Motor neuron (in vitro differentiated cells): ENCODE measurements at regions of chr6 and their contacts with region 1.

Region 1: GRCh38 chr6:125099211-125100073 is 54.1 kb upstream of the TPD52L1 start:
- ATAC-seq: peak; percentile 73 to 99 (median 96)
- H3K4me3 ChIP-seq: peak overlapping the region; percentile 35 to 54 (median 36)
- H3K27ac ChIP-seq: no peak overlapping the region
- H3K4me1 ChIP-seq: peaks cover 8% of the 10 kb centered on the region in 2 donors

Region 2: DNA sequence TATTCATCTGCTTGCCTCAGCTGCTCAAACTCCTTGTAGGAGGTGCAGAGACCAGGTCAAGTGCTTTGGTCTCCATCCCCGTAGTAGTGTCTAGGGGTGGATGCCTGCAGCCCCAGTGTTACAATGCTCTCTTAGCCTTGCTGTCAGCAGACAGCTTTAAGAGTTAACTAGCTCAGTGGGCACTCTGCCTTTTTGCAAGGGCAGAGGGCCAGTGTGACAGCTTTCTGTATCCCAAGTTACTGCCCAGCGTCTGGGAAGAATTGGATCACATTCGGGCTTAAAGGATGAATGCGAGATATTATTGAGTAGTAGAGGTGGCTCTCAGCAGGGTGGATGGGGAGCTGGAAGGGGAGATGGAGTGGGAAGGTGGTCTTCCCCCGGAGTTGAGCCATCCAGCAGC is 477.1 kb before region 1 on chr6:
- in situ Hi-C with region 1: no loop called
- ATAC-seq: no peak
- H3K4me3 ChIP-seq: no peak overlapping the region
- H3K27ac ChIP-seq: no peak overlapping the region
- H3K4me1 ChIP-seq: no peaks in the 10 kb centered on the region

Region 3: DNA sequence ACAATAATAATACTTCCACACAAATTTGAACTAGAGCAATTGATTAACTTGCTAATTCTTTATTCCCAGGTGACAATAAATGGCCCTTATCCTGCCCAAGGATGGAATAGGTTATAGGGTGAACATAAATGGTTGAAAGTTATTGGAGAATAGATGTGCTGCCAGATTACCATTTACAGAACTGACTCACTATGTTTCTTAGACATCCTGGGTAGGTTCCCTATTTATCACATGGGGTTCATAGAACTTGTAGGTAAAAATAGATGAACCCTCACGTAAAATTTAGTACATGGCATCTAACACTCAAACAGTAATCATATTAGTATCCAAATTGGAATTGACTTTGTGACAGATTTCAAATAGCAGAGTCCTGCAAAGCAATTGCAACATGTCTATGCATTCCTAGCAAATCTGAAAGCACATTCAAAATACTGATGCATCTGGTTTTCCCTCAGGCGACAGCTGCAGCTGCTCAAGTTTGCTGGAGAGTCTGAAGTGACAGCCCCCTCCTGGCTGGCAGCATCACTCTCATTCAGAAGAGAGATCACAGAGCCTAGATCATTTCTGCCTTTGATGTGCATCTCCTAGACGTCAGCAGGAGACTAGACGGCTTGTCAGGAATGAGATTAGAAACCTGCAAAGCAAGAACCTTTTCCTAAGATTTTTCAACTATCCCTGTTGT is 217.4 kb before region 1 on chr6:
- in situ Hi-C with region 1: loop called in 1 of 9 experiments (anchors 25 kb)
- ATAC-seq: peak in 4 of 8 experiments; percentile 27 to 96 (median 92)
- H3K4me3 ChIP-seq: no peak overlapping the region
- H3K27ac ChIP-seq: no peak overlapping the region
- H3K4me1 ChIP-seq: peaks cover 0 to 10% of the 10 kb centered on the region in 2 donors

Region 4: GRCh38 chr6:124924333-124924759 is 175.1 kb before region 1 on chr6:
- in situ Hi-C with region 1: no loop called
- ATAC-seq: no peak
- H3K4me3 ChIP-seq: no peak overlapping the region
- H3K27ac ChIP-seq: no peak overlapping the region
- H3K4me1 ChIP-seq: peaks cover 0 to 4% of the 10 kb centered on the region in 2 donors